Activated CD4-positive, alpha-beta T cell treated with anti-CD3 and anti-CD28 coated beads for 36 hours (primary cell): ENCODE measurements at regions of chr11 and their contacts with region 1.

Region 1: DNA sequence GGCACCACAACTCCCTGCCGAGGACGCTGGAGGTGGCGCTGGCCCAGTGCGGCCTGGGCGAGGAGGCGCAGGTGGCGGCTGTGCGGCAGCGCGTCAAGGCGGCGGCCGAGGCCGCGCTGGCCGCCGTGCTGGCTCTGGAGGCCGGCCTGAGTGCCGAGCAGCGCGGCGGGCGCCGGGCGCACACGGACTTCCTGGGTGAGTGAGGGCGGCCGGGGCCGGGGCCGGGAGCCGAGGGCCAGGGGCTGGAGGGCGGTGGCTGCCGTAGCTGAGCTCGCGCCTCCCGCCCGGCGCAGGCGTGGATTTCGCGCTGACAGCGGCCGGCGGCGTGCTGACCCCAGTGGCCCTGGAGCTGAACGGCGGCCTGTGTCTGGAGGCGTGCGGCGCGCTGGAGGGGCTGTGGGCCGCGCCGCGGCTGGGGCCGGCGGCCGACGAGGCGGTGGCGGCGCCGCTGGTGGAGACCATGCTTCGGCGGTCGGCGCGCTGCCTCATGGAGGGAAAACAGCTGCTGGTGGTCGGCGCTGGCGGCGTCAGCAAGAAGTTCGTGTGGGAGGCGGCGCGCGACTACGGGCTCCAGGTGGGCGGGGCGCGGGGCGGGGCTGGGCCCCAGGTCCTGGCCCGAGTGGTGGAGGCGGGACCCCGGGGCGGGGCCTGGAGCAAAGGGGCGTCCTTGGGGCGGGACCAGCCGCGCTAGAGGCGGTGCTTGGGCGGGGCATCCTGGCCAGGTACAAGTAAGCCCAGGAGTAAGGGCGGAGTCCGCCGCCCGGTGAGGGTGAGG is 5.4 kb downstream of the CARNS1 start:
- DNase-seq: peak; percentile 99
- ATAC-seq: peak; percentile 92
- H3K4me3 Mint-ChIP-seq: peak overlapping the region; percentile 76
- H3K27ac Mint-ChIP-seq: peak overlapping the region; percentile 84
- H3K4me1 Mint-ChIP-seq: peaks cover 49% of the 10 kb centered on the region
- H3K27me3 Mint-ChIP-seq: no peaks in the 10 kb centered on the region

Region 2: GRCh38 chr11:67391304-67392132 is 29.3 kb before region 1 on chr11 and contains the start of gene RAD9A:
- CTCF ChIA-PET with region 1: interaction called, 6 read pairs
- POLR2A ChIA-PET with region 1: no interaction called
- intact Hi-C with region 1: loop called in 1 of 2 experiments (anchors 1 kb)
- DNase-seq: peak; percentile 97
- ATAC-seq: peak; percentile 74
- H3K4me3 Mint-ChIP-seq: peak within 1 kb of the TSS; percentile 89
- H3K27ac Mint-ChIP-seq: peak within 1 kb of the TSS; percentile 80
- H3K4me1 Mint-ChIP-seq: peaks cover 34% of the 10 kb centered on the region
- H3K27me3 Mint-ChIP-seq: no peaks in the 10 kb centered on the region
- total RNA-seq, gene RAD9A: 28.8 to 30.0 TPM

Region 3: GRCh38 chr11:67409261-67409666 is 11.6 kb before region 1 on chr11:
- CTCF ChIA-PET with region 1: interaction called, 34 read pairs
- POLR2A ChIA-PET with region 1: interaction called, 14 read pairs
- intact Hi-C with region 1: loop called in 1 of 2 experiments (anchors 1 kb)
- DNase-seq: peak; percentile 84
- ATAC-seq: peak; percentile 62
- H3K4me3 Mint-ChIP-seq: peak overlapping the region; percentile 85
- H3K27ac Mint-ChIP-seq: peak overlapping the region; percentile 87
- H3K4me1 Mint-ChIP-seq: peaks cover 74% of the 10 kb centered on the region
- H3K27me3 Mint-ChIP-seq: no peaks in the 10 kb centered on the region

Region 4: DNA sequence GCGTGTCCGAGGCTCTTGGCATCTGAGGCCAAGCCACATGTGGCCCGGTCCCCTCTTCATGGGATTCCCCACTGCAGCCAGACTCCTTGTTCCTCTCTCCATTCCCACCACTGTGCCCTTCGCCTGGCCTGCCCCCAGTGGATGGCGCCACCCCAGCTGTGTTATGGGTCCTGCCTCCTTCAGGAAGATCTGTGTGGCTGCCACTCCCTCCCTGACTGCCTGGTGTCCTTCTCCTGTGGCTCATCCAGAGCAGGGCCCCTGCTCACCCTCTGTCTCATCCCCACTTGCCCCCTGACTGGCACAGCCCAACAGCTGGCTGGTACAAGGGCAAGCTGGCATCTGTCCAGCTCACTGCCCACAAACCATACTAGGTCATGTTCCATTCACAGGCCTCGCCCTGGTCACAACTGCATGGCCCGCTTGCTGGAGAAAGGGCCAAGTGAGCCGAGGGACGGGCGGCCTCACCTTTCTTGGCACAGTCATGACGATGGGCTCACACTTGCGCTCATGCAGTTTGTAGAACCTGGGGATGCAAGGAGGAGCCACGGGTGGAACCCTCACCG is 18.6 kb after region 1 on chr11:
- CTCF ChIA-PET with region 1: interaction called, 3 read pairs
- POLR2A ChIA-PET with region 1: no interaction called
- intact Hi-C with region 1: loop called in 1 of 2 experiments (anchors 2 kb)
- DNase-seq: peak; percentile 77
- ATAC-seq: peak; percentile 2
- H3K4me3 Mint-ChIP-seq: peak overlapping the region; percentile 84
- H3K27ac Mint-ChIP-seq: peak overlapping the region; percentile 97
- H3K4me1 Mint-ChIP-seq: peaks cover 49% of the 10 kb centered on the region
- H3K27me3 Mint-ChIP-seq: no peaks in the 10 kb centered on the region

Region 5: DNA sequence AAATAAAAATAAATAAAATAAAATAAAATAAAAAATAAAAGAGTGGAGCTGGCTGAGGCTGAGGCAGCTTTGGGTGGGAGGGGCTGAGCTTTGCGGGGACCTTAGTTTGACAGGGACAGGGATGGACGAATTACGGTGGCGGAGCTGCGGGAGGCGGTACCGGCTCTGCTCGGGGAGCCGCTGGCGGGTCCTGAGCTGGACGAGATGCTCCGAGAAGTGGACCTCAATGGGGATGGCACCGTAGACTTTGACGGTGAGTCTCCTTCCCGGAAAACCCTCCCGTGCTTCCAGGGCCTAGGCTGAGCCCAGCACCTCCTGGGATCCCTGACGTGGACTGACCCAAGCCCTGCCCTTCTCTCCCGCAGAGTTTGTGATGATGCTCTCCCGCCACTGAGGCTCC is 37.4 kb after region 1 on chr11:
- CTCF ChIA-PET with region 1: no interaction called
- POLR2A ChIA-PET with region 1: no interaction called
- intact Hi-C with region 1: no loop called
- DNase-seq: no peak
- ATAC-seq: no peak
- H3K4me3 Mint-ChIP-seq: no peak overlapping the region
- H3K27ac Mint-ChIP-seq: no peak overlapping the region
- H3K4me1 Mint-ChIP-seq: peaks cover 5% of the 10 kb centered on the region
- H3K27me3 Mint-ChIP-seq: no peaks in the 10 kb centered on the region

Region 6: GRCh38 chr11:67482825-67483798 is 62.3 kb after region 1 on chr11 and contains the start of gene AIP:
- CTCF ChIA-PET with region 1: no interaction called
- POLR2A ChIA-PET with region 1: interaction called, 3 read pairs
- intact Hi-C with region 1: loop called in 1 of 2 experiments (anchors 1 kb)
- DNase-seq: peak; percentile 99
- ATAC-seq: peak; percentile 72
- H3K4me3 Mint-ChIP-seq: peak within 1 kb of the TSS; percentile 86
- H3K27ac Mint-ChIP-seq: peak within 1 kb of the TSS; percentile 99
- H3K4me1 Mint-ChIP-seq: peaks cover 50% of the 10 kb centered on the region
- H3K27me3 Mint-ChIP-seq: no peaks in the 10 kb centered on the region
- total RNA-seq, gene AIP: 142 to 144 TPM